ENCODE measurements at regions of chr5 and their contacts with region 1.

Region 1: GRCh38 chr5:10627160-10627701 is 63.4 kb downstream of the ANKRD33B start:
- DNase-seq: no peak
- CTCF ChIP-seq: no peak

Region 2: GRCh38 chr5:10452768-10453331 is 174.4 kb before region 1 on chr5:
- in situ Hi-C with region 1: loop called (anchors 5 kb)
- DNase-seq: peak; percentile 83
- CTCF ChIP-seq: peak; percentile 85